ENCODE measurements at regions of chr2 and their contacts with region 1.

Region 1: DNA sequence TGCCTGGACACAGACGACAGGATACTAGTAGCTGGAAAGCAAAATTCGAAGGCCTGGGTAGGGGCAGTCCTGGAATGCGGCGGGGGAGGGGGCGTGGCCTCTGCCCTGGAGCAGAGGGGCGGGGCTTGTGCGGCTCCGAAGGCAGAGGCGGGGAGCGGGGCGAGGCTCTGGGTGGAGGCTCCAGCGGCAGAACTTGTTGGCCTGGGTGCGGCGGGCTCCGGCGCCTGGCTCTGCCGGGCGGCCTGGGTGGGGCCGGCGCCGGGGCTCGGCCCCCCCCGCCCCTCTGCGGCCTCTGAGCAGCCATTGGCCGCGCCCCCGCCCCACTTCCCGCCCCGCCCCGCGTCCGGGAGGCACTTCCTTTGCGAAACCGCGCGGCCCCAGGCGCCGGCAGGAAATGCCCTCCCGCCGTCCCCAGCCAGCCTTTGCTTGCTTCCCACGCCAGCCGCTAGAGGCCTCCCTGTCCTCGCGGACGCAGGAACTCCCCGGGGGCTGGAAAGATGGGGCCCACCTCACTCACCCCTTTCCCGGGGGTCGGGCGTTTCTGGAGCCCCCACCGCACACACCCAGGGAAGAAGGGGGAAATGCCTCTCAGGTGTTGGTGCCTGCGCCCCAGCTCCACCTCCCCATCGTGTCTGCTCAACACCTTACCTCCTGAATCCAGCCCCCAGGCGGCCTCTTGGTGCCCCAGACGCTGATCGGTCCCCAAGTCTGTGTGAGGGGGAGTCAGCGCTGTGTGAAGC is 6.7 kb downstream of the CTDSP1 start:
- DNase-seq: peak; percentile 90
- H3K4me3 Mint-ChIP-seq: peak overlapping the region; percentile 81
- H3K27ac Mint-ChIP-seq: peak overlapping the region; percentile 74
- H3K4me1 Mint-ChIP-seq: peaks cover 29% of the 10 kb centered on the region
- H3K27me3 Mint-ChIP-seq: no peaks in the 10 kb centered on the region

Region 2: DNA sequence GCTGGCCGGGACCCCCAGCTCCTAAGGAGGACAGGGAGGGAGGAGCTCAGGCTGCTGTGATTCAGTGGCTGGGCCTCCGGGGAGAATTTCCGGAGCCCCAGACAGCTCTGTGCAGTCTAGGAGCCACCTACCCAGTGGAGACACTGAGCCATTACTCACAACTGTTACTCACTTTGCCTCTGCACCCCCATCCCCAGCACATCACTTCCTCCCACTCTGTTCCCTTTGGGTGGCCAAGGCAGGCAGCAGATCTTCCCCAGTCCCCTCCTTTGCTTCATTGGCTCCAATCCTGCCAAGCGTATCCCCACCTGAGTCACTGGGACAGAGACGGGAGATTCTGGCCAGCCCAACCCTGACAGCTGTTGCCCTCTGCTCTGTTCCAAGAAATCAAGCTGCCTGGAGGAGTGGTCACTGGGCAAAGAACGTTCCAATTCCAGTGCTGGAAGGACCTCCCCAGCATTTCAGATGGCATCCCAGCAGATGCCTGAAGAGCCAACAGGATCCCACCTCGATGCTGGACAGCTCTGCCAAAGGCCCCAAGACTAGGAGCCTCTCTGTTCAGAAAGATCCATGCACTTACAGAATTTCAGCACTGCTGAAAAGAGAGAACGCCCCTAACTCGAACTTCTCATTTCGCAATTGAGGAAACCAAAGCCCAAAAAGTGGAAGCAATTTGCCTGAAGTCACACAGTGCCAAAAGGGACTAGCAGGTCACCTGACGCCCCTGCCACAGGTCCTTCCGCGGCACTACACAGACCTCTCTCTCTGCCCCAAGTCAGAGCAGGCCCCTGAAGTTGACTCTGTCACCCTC is 471.9 kb before region 1 on chr2:
- intact Hi-C with region 1: no loop called
- DNase-seq: no peak
- H3K4me3 Mint-ChIP-seq: no peak overlapping the region
- H3K27ac Mint-ChIP-seq: no peak overlapping the region
- H3K4me1 Mint-ChIP-seq: peaks cover 16% of the 10 kb centered on the region
- H3K27me3 Mint-ChIP-seq: no peaks in the 10 kb centered on the region

Region 3: GRCh38 chr2:218367415-218368153 is 38.8 kb before region 1 on chr2:
- intact Hi-C with region 1: loop called (anchors 2 kb)
- DNase-seq: peak; percentile 64
- H3K4me3 Mint-ChIP-seq: peak overlapping the region; percentile 78
- H3K27ac Mint-ChIP-seq: peak overlapping the region; percentile 61
- H3K4me1 Mint-ChIP-seq: peaks cover 7% of the 10 kb centered on the region
- H3K27me3 Mint-ChIP-seq: peaks cover 42% of the 10 kb centered on the region

Region 4: DNA sequence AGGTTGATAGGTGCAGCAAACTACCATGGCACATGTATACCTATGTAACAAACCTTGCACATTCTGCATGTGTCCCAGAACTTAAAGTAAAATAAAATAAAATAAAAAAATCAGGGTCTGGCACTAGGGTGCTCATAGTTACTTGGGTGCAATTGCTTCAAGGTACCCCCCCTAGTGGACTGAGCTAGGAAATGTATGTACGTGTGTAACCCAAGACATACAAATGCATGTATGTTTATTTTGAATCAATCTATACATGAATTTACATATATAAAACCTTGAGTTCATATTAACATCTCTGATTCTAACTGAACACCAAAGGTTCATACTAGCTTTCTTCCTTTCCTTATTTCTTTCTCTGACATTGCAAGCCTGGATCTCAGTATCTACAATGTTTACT is 110.2 kb after region 1 on chr2:
- intact Hi-C with region 1: loop called (anchors 1 kb)
- DNase-seq: no peak
- H3K4me3 Mint-ChIP-seq: no peak overlapping the region
- H3K27ac Mint-ChIP-seq: no peak overlapping the region
- H3K4me1 Mint-ChIP-seq: peaks cover 23% of the 10 kb centered on the region
- H3K27me3 Mint-ChIP-seq: no peaks in the 10 kb centered on the region

Region 5: DNA sequence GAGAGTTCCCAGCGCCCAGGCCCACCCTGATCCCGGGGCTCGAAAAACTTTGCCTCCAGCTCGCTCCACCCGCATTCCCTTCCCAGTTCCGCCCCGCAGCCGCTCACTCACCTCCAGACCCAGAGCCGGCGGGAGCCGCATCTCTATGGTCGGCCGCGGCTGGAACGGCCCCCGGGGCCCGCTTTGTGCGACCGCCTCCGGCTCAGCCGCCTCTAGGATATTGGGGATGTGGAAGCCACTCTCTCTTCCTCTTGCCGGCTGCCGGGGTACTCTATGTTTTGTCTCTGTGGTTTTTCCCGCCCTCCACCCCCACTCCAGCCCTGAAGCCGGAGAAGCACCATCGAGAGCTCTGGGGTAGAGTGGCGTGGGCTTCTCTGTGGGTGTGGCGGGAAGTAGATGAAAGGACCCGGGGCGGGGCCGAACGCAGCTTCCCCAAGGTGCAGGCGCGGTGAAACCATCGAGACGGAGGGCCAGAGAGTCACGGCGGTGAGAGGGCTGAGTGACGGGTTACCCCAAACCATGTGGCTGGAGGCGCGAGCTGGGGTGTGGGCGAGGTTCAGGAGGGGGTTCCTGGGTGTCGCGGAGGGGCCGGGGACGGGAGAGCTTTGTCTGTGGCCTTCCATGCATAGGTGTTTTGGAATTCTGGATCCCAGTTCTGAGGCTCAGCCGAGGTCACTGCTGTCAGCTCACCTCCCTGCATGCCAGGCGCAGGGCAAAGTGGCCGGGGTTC is 253.0 kb after region 1 on chr2 and contains the starts of genes BCS1L and ZNF142:
- intact Hi-C with region 1: loop called (anchors 1 kb)
- DNase-seq: peak; percentile 92
- H3K4me3 Mint-ChIP-seq: peak within 1 kb of the TSS; percentile 99
- H3K27ac Mint-ChIP-seq: peak within 1 kb of the TSS; percentile 97
- H3K4me1 Mint-ChIP-seq: peaks cover 29% of the 10 kb centered on the region
- H3K27me3 Mint-ChIP-seq: no peaks in the 10 kb centered on the region
- total RNA-seq, gene BCS1L: 85.1 and 85.3 TPM in 2 replicates
- total RNA-seq, gene ZNF142: 61.8 and 64.4 TPM in 2 replicates

Region 6: DNA sequence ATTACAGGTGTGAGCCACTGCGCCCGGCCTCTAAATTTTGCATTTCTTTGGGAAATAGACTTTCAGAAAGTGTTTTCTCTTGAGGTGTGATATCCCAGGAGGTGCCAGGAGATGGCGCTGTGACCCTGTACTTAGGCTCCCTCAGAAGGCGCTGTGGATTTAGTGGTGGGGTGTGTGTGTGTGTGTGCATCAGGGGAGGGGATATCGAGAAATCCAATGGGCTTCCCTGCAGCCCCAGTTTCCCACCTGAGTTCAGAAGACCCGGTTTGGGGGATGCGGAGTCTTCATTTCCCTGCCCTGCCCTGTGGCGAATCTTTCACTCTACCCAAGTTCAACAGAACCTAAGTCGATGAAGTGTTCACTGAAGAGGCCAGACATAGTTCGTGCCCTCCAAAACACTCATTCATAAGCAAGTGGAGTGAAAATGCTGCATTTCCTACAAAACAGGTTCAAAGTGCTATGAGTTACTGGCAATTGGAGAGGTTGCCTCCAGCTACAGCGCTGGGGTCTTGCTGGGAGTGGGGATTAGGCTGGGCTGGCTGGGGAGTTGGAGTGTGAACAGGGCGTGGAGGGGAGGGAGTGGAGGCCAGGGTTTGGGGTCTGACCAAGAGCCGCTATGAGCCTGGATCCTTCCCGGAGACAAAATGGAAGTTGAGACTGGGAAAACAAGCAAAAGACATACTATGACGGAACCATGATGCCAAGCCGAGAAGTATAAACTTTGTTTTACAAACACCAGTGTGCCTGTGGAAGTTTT is 446.7 kb after region 1 on chr2:
- intact Hi-C with region 1: loop called (anchors 5 kb)
- DNase-seq: peak; percentile 18
- H3K4me3 Mint-ChIP-seq: no peak overlapping the region
- H3K27ac Mint-ChIP-seq: no peak overlapping the region
- H3K4me1 Mint-ChIP-seq: no peaks in the 10 kb centered on the region
- H3K27me3 Mint-ChIP-seq: peaks cover 63% of the 10 kb centered on the region